ENCODE measurements at regions of chr9 and their contacts with region 1.

Region 1: GRCh38 chr9:73067074-73067473 is 84.6 kb upstream of the ANXA1 start:
- DNase-seq: no peak
- ATAC-seq: no peak
- H3K4me3 ChIP-seq: no peak overlapping the region
- H3K27ac ChIP-seq: no peak overlapping the region
- H3K4me1 ChIP-seq: no peaks in the 10 kb centered on the region
- H3K27me3 ChIP-seq: no peaks in the 10 kb centered on the region
- CTCF ChIP-seq: peak in 1 of 9 donors; percentile 6

Region 2: GRCh38 chr9:72864327-72864726 is 202.7 kb before region 1 on chr9:
- intact Hi-C with region 1: loop called in 1 of 10 experiments (anchors 10 kb)
- DNase-seq: no peak
- ATAC-seq: no peak
- H3K4me3 ChIP-seq: no peak overlapping the region
- H3K27ac ChIP-seq: no peak overlapping the region
- H3K4me1 ChIP-seq: peaks cover 0 to 4% (median 0%) of the 10 kb centered on the region in 9 donors
- H3K27me3 ChIP-seq: no peaks in the 10 kb centered on the region
- CTCF ChIP-seq: no peak